H1 (cell line): ENCODE measurements at regions of chr2 and their contacts with region 1.

Region 1: GRCh38 chr2:217521820-217522219 is 481.0 kb downstream of the TNS1 start:
- DNase-seq: no peak
- H3K4me3 ChIP-seq: no peak overlapping the region
- H3K27ac ChIP-seq: no peak overlapping the region
- H3K4me1 ChIP-seq: no peaks in the 10 kb centered on the region
- H3K27me3 ChIP-seq: no peaks in the 10 kb centered on the region
- CTCF ChIP-seq: no peak
- EP300 ChIP-seq: no peak
- POLR2A ChIP-seq: no peak
- RAD21 ChIP-seq: no peak

Region 2: DNA sequence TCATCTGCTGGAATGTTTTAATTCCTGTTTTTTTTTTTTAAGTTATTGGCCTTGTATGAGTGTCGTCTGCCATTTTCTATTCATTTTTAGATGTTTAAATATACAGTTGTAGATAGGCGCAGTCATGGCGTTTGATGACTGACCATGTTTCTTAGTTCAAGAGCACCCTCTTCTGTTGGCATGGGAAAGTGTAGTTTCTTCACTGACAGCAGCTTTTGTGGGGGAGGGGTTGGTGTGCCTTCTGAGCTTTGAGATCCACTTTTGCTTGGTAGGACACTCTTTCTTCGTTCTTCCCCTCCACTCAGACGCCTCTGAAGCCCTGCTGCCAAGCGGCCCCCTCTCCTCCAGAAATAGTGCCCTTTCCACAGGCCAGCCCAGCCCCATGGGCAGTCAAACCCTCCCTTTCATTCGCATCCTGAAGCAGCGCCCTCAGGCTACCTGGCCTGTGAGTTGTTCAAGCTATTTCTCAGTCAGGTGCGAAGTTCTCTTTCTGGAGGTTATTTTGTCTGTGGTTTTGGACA is 11.0 kb before region 1 on chr2:
- CTCF ChIA-PET with region 1: interaction called, 18 read pairs
- POLR2A ChIA-PET with region 1: no interaction called
- DNase-seq: peak; percentile 15 to 65
- H3K4me3 ChIP-seq: peak overlapping the region in 1 of 4 experiments; percentile 33; a peak in 3 of 8 replicates
- H3K27ac ChIP-seq: no peak overlapping the region
- H3K4me1 ChIP-seq: peaks cover 0 to 3% (median 2%) of the 10 kb centered on the region in 4 experiments; a peak in 3 of 7 replicates
- H3K27me3 ChIP-seq: no peaks in the 10 kb centered on the region
- CTCF ChIP-seq: peak; percentile 45 to 82 (median 79)
- EP300 ChIP-seq: no peak
- POLR2A ChIP-seq: no peak
- RAD21 ChIP-seq: peak; percentile 97 to 98